ENCODE measurements at regions of chr9 and their contacts with region 1.

Region 1: GRCh38 chr9:128818099-128818838 is at the start of gene ENDOG:
- DNase-seq: peak; percentile 99

Region 2: GRCh38 chr9:128675382-128675781 is 142.9 kb before region 1 on chr9:
- CTCF ChIA-PET with region 1: no interaction called
- POLR2A ChIA-PET with region 1: no interaction called
- DNase-seq: no peak

Region 3: GRCh38 chr9:128786681-128787601 is 31.3 kb before region 1 on chr9 and contains the start of gene TBC1D13:
- CTCF ChIA-PET with region 1: interaction called, 4 read pairs
- POLR2A ChIA-PET with region 1: interaction called, 10 read pairs
- DNase-seq: peak; percentile 92

Region 4: GRCh38 chr9:128792978-128793686 is 25.1 kb before region 1 on chr9:
- CTCF ChIA-PET with region 1: interaction called, 4 read pairs
- POLR2A ChIA-PET with region 1: interaction called, 10 read pairs
- DNase-seq: no peak

Region 5: DNA sequence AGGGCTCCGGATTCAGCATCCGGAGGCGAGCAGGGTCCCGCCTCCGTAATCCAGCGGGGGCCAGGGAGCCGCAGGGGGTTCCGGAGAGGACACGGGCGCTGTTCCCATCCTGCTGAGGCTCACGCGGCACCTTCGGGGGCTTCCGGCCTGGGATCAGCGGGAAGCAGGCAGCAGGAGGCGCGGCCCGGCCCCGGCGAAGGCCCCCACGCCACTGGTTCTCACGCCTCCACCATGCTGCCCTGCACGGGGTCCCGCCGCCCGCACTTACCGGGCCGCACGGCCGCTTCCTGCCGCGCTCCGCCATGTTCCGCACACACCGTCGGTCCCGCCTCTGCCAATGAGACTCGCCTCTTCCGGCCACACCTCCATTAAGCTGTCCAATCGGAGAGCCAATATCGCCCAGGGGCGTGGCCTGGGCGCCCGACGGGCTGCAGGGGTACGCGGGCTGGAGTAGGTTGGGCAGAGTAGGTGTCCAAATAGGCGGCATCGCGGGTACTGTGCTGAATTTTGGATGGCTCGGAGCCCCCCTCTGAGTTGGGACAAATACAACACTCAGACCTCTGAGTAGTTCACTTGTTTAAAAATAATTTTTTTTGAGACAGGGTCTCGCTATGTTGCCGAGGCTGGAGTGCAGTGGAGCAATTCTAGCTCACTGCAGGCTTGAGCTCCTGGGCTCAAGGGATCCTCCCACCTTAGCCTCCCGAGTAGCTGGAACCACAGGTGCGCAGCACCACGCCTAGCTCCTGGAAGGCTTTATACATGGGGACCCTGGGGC is 11.4 kb after region 1 on chr9 and contains the start of gene SPOUT1:
- CTCF ChIA-PET with region 1: interaction called, 20 read pairs
- POLR2A ChIA-PET with region 1: interaction called, 57 read pairs
- DNase-seq: peak; percentile 99

Region 6: GRCh38 chr9:128972956-128973355 is 154.7 kb after region 1 on chr9:
- CTCF ChIA-PET with region 1: no interaction called
- POLR2A ChIA-PET with region 1: no interaction called
- DNase-seq: no peak

Measured in HEK293T (cell line).